H1 (cell line): ENCODE measurements at regions of chr1 and their contacts with region 1.

Region 1: GRCh38 chr1:20483833-20484518 is 2.0 kb downstream of the CAMK2N1 start:
- DNase-seq: peak in 1 of 2 experiments; percentile 81
- H3K4me3 ChIP-seq: peak overlapping the region; percentile 61 to 74 (median 68)
- H3K27ac ChIP-seq: no peak overlapping the region
- H3K4me1 ChIP-seq: peaks cover 6 to 35% (median 13%) of the 10 kb centered on the region in 4 experiments
- H3K27me3 ChIP-seq: peaks cover 4 to 59% (median 39%) of the 10 kb centered on the region in 4 experiments
- CTCF ChIP-seq: peak; percentile 34 to 45 (median 36)
- EP300 ChIP-seq: no peak
- POLR2A ChIP-seq: no peak
- RAD21 ChIP-seq: peak; percentile 1 to 24; a peak in 2 of 4 replicates

Region 2: DNA sequence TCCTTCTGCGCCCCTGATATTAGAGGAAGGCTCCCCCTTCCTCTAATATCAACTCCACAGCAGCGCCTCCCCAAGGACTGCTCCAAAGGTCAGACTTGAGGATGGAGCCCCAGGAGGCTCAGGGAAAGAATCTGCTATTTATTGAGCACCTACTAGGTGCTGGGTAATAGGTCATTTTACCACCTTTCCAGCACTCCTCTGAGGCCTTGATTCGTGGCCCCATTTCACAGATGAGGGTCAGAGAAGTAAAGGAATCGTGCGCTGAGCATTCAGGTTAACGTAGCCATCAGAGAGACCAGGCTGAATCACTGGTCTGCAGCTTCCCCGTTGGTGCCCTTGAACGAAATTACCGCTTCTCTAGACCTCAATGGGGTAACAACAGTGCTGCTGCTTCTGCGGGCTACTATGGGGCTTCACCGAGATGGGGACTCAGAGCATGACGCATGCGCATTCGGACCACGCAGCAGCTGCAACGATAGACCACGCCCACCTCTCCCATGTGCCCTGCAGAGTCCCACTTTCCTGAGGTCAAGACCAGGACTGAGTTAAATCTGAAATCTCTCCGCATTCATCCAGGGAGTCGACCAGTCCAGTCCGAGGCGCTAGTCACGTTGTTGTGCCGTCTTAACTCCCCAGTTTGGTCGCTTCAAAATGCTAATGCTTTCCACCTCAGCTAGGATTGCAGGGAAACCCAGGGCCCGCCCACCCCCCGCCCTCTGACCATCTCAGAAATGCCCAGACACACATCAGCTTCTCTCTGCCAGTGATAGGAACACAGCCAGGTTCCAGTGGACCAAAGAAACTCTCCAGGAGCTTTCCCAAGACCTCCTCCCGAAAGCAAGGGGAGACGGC is 10.9 kb before region 1 on chr1:
- CTCF ChIA-PET with region 1: interaction called, 26 read pairs
- POLR2A ChIA-PET with region 1: interaction called, 8 read pairs
- DNase-seq: peak in 1 of 2 experiments; percentile 89
- H3K4me3 ChIP-seq: peak overlapping the region; percentile 10 to 50 (median 23); a peak in 4 of 8 replicates
- H3K27ac ChIP-seq: no peak overlapping the region
- H3K4me1 ChIP-seq: peaks cover 8 to 19% (median 12%) of the 10 kb centered on the region in 4 experiments; a peak in 6 of 7 replicates
- H3K27me3 ChIP-seq: peaks cover 0 to 8% (median 4%) of the 10 kb centered on the region in 4 experiments; a peak in 5 of 7 replicates
- CTCF ChIP-seq: no peak
- EP300 ChIP-seq: no peak
- POLR2A ChIP-seq: no peak
- RAD21 ChIP-seq: no peak

Region 3: GRCh38 chr1:20569523-20570098 is 85.6 kb after region 1 on chr1:
- CTCF ChIA-PET with region 1: no interaction called
- POLR2A ChIA-PET with region 1: no interaction called
- DNase-seq: no peak
- H3K4me3 ChIP-seq: no peak overlapping the region
- H3K27ac ChIP-seq: no peak overlapping the region
- H3K4me1 ChIP-seq: no peaks in the 10 kb centered on the region
- H3K27me3 ChIP-seq: peaks cover 0 to 9% (median 0%) of the 10 kb centered on the region in 4 experiments; a peak in 1 of 7 replicates
- CTCF ChIP-seq: no peak
- EP300 ChIP-seq: no peak
- POLR2A ChIP-seq: no peak
- RAD21 ChIP-seq: no peak